Endothelial cell of umbilical vein (primary cell): ENCODE measurements at regions of chr10 and their contacts with region 1.

Region 1: DNA sequence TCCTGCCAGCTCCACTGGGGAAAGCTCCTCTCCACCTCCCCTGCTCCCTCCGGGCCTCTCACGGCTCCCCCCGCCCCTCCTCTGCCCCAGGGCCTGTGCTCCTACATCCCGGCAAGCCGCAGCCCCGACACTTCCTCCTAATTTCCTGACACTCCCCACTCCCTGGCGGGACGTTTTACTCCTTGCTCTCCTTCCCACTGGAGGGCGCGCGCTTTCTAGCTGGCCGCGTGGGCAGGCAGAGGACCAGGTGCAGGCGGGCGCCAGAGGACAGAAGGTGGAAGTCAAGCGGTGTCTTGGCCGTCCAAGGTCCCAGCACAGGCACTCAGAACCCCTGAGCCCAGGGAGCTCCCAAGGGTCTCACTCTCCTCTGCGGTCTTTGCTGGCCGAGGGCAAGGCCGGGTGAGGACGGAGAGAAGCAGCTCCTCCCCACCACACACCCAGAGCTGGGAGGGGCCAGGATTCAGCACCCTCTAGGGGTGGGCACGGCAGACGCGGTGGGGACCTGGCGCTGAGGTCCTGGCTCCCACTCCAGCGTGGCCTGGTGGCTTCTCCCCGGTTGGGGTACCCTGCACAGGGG is 19.1 kb downstream of the ADAM8 start:
- DNase-seq: peak; percentile 29
- H3K4me3 ChIP-seq: no peak overlapping the region
- H3K27ac ChIP-seq: no peak overlapping the region
- H3K4me1 ChIP-seq: peaks cover 26% of the 10 kb centered on the region
- H3K27me3 ChIP-seq: no peaks in the 10 kb centered on the region
- CTCF ChIP-seq: peak; percentile 24 to 33
- POLR2A ChIP-seq: no peak

Region 2: DNA sequence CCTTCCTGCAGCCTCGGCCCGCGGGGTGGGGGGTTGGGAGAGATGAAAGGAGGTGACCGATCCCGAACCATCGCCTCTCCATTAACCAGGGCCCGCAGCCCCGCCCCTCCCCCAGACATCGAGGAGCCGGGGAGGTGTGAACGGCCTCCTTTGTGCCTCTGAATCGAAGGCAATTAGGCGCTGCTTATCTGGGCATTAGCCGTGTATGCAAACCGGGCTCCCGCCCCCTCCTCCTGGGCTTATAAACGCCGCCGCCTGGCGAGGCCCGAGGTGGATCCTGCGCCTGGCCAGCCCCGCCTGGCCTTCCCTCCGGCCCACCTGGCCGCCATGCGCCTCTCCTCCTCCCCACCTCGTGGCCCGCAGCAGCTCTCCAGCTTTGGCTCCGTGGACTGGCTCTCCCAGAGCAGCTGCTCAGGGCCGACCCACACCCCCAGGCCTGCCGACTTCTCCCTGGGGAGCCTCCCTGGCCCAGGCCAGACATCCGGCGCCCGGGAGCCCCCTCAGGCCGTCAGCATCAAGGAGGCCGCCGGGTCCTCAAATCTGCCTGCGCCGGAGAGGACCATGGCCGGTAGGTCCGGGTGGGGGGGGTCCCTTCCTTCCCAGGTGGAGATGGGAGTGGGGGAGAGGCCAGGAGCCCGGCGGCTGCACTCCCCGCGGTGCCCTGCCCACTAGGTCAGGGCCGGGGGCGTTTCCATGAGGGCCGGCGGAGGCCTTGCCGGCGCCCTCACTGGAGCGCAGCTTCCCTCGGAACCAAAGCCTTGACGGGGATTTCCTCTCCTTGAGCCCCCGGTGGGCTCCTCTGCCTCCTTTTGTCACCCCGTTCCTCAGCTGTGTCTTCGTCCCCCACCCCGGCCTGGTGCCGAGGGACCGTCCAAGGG is 19.8 kb before region 1 on chr10 and contains the start of gene VENTX:
- CTCF ChIA-PET with region 1: no interaction called
- POLR2A ChIA-PET with region 1: no interaction called
- dilution Hi-C with region 1: no loop called
- intact Hi-C with region 1: no loop called
- DNase-seq: no peak
- H3K4me3 ChIP-seq: no peak within 1 kb of the TSS
- H3K27ac ChIP-seq: no peak within 1 kb of the TSS
- H3K4me1 ChIP-seq: no peaks in the 10 kb centered on the region
- H3K27me3 ChIP-seq: peaks cover 28 to 43% of the 10 kb centered on the region in 2 experiments
- CTCF ChIP-seq: no peak
- POLR2A ChIP-seq: no peak
- total RNA-seq, gene VENTX: not detected in 2 replicates

Region 3: DNA sequence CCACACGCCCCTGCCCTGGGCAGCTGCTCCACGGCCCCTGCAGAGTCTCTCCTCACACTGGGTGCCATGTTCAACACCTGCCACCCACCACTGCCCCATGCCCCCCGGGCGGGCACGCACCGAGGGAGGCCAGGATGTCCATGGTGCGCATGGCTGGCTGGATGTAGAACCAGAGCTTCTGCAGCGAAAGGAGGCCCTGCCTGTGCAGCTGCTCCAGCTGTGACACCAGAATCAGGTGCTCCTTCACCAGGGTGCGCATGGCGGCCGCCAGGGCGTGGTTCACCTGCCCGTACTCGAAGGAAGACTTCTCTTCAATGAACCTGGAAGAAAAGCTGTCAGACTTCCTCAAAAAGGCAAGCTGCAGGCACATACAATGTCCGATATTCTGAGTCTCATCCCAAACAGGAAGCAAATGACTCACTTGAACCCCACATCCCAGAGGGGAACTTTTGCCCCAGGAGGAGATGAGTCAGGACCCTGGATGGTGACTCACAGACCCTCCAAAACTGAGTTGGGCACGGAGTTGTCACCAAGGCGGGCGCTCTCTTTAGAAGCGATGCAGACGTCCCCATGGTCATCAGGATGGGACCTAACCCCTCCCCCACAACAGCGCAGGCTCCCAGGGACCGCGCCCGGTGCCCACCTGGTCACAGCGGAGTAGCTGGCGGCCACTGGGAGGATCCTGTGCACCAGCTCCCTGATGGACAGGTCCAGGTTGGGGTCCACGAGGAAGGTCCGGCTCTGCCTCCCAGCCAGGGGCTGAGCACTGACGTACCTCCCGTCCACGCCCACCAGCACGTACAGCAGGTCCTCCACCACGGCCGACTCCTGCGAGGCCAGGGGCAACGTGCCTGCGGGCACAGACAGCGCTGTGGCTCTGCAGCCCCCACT is 35.6 kb after region 1 on chr10:
- CTCF ChIA-PET with region 1: interaction called, 10 read pairs
- POLR2A ChIA-PET with region 1: no interaction called
- dilution Hi-C with region 1: no loop called
- intact Hi-C with region 1: loop called (anchors 1 kb)
- DNase-seq: peak; percentile 63
- H3K4me3 ChIP-seq: no peak overlapping the region
- H3K27ac ChIP-seq: peak overlapping the region; percentile 18
- H3K4me1 ChIP-seq: peaks cover 12% of the 10 kb centered on the region
- H3K27me3 ChIP-seq: no peaks in the 10 kb centered on the region
- CTCF ChIP-seq: no peak
- POLR2A ChIP-seq: no peak